Motor neuron (in vitro differentiated cells): ENCODE measurements at regions of chr11 and their contacts with region 1.

Region 1: GRCh38 chr11:75241036-75241905 is 697 bp downstream of the TPBGL start:
- ATAC-seq: peak; percentile 76 to 92 (median 88)
- H3K4me3 ChIP-seq: peak overlapping the region; percentile 47 to 62 (median 50)
- H3K27ac ChIP-seq: peak overlapping the region; percentile 30 to 69
- H3K4me1 ChIP-seq: peaks cover 6 to 11% of the 10 kb centered on the region in 2 donors

Region 2: GRCh38 chr11:74948898-74949747 is 292.1 kb before region 1 on chr11 and contains the starts of genes SPCS2 and XRRA1:
- in situ Hi-C with region 1: loop called in 2 of 9 experiments (anchors 25 kb)
- ATAC-seq: peak; percentile 98 to 99 (median 98)
- H3K4me3 ChIP-seq: peak within 1 kb of the TSS; percentile 80 to 91 (median 82)
- H3K27ac ChIP-seq: peak within 1 kb of the TSS; percentile 82 to 91
- H3K4me1 ChIP-seq: peaks cover 8 to 11% of the 10 kb centered on the region in 2 donors
- total RNA-seq, gene SPCS2: 30.3 to 80.1 (median 44.5) TPM
- total RNA-seq, gene XRRA1: 9.7 to 43.9 (median 16.8) TPM

Region 3: GRCh38 chr11:75022759-75023396 is 218.4 kb before region 1 on chr11:
- in situ Hi-C with region 1: loop called in 3 of 9 experiments (anchors 10 to 25 kb)
- ATAC-seq: peak; percentile 81 to 99 (median 85)
- H3K4me3 ChIP-seq: no peak overlapping the region
- H3K27ac ChIP-seq: no peak overlapping the region
- H3K4me1 ChIP-seq: peaks cover 10 to 13% of the 10 kb centered on the region in 2 donors

Region 4: GRCh38 chr11:75142714-75143419 is 98.4 kb before region 1 on chr11:
- in situ Hi-C with region 1: loop called in 7 of 9 experiments (anchors 10 to 25 kb)
- ATAC-seq: peak; percentile 82 to 98 (median 98)
- H3K4me3 ChIP-seq: no peak overlapping the region
- H3K27ac ChIP-seq: peak overlapping the region in 1 of 2 donors; percentile 76
- H3K4me1 ChIP-seq: peaks cover 0 to 9% of the 10 kb centered on the region in 2 donors